ENCODE measurements at regions of chr4 and their contacts with region 1.

Region 1: DNA sequence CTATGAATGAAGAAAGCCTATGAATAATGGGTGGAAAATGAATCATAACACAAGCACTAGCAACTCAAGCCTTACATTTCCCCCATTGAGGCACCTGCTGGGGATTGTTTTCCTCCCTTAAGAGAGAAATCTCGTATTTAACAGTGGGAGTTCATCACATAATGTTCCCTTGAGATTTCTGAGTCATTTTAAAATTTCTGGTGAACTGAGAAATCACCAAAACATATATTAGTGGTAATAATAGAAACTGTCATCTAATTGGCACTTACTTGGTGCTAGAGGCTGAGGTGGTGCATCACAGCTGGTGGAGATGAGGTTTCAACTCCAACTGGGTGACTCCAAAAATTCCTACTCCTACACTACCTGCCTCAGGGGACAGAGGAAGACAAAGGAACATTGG is 561.3 kb upstream of the LCORL start:
- DNase-seq: no peak
- ATAC-seq: no peak
- H3K4me3 ChIP-seq: no peak overlapping the region
- H3K27ac ChIP-seq: no peak overlapping the region
- H3K4me1 ChIP-seq: no peaks in the 10 kb centered on the region
- H3K27me3 ChIP-seq: no peaks in the 10 kb centered on the region
- CTCF ChIP-seq: no peak
- POLR2A ChIP-seq: no peak

Region 2: DNA sequence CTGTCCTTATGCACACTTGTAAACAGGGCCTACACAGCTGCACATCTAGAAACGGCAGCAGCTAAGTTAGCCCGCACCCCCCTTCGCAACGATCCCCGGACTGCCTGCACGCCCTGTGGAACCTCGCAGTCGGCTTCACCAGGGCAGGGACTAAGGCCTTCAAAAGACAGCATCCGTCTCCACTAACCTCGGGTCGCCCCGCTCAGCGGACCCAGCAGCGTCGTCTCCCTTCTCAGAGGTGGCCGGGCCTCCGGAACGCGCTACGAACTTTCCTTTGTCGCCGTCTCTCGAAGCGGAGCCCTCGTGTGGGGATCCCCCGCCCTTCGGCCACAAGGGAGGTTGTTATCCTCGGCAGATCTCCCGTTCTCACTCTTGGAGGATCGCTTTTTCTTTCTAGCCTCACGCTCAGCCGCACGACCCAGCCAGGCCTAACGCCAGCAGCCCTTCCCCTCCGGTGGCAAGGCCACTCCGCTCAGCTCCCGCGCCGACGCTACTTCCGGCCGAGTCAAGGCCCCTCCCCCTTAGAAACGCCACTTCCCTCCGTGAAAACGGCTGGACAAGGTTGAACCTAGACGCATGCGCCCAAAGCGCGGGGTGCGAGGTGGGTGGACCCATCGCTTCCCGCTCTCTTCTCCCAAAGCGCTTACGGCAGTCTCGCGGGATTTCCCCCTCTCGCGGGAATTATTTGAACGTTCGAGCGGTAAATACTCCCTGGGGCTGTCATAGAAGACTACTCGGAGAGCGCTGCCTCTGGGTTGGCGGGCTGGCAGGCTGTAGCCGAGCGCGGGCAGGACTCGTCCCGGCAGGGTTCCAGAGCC is 772.4 kb before region 1 on chr4 and contains the starts of genes DCAF16 and NCAPG:
- intact Hi-C with region 1: loop called in 1 of 2 experiments (anchors 10 kb)
- DNase-seq: peak; percentile 99 to 100 (median 100)
- ATAC-seq: peak; percentile 99 to 100 (median 99)
- H3K4me3 ChIP-seq: peak within 1 kb of the TSS; percentile 73 to 86 (median 82)
- H3K27ac ChIP-seq: peak within 1 kb of the TSS; percentile 78 to 93 (median 90)
- H3K4me1 ChIP-seq: peaks cover 0 to 26% (median 14%) of the 10 kb centered on the region in 4 donors
- H3K27me3 ChIP-seq: no peaks in the 10 kb centered on the region
- CTCF ChIP-seq: no peak
- POLR2A ChIP-seq: peak; percentile 97
- total RNA-seq, gene DCAF16: 4.2 to 7.9 (median 5.6) TPM
- total RNA-seq, gene NCAPG: 0.44 to 2.5 (median 1.3) TPM in 5 of 6 experiments, not detected in the other

Region 3: GRCh38 chr4:18033111-18034085 is 549.4 kb before region 1 on chr4:
- intact Hi-C with region 1: no loop called
- DNase-seq: no peak
- ATAC-seq: no peak
- H3K4me3 ChIP-seq: no peak overlapping the region
- H3K27ac ChIP-seq: no peak overlapping the region
- H3K4me1 ChIP-seq: no peaks in the 10 kb centered on the region
- H3K27me3 ChIP-seq: no peaks in the 10 kb centered on the region
- CTCF ChIP-seq: no peak
- POLR2A ChIP-seq: no peak

Region 4: GRCh38 chr4:18675586-18676525 is 93.0 kb after region 1 on chr4:
- intact Hi-C with region 1: no loop called
- DNase-seq: no peak
- ATAC-seq: no peak
- H3K4me3 ChIP-seq: no peak overlapping the region
- H3K27ac ChIP-seq: no peak overlapping the region
- H3K4me1 ChIP-seq: no peaks in the 10 kb centered on the region
- H3K27me3 ChIP-seq: no peaks in the 10 kb centered on the region
- CTCF ChIP-seq: no peak
- POLR2A ChIP-seq: no peak

Region 5: DNA sequence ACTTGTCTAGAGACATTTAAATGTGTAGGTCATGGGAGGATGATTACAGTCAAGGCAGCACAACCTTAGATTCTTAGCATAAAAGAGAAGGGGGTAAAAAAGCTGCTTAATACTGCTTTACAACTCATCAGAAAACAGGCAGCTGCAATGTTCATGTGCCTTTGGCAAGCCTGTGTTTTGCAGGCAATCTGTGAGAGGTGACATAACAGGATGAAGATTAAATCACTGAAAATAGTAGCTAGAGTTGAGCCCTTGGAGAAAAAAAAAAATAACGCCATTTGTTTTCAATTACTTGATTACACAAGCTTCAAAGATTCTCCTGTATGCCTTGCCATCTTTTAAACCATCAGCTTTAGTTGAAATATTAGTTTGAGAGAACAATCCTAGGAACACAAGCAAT is 286.3 kb after region 1 on chr4:
- intact Hi-C with region 1: no loop called
- DNase-seq: no peak
- ATAC-seq: no peak
- H3K4me3 ChIP-seq: no peak overlapping the region
- H3K27ac ChIP-seq: no peak overlapping the region
- H3K4me1 ChIP-seq: no peaks in the 10 kb centered on the region
- H3K27me3 ChIP-seq: no peaks in the 10 kb centered on the region
- CTCF ChIP-seq: no peak
- POLR2A ChIP-seq: no peak